Activated CD4-positive, alpha-beta T cell treated with anti-CD3 and anti-CD28 coated beads for 36 hours (primary cell): ENCODE measurements at regions of chr5 and their contacts with region 1.

Region 1: GRCh38 chr5:73381590-73382400 is 66.8 kb downstream of the FOXD1 start:
- DNase-seq: peak; percentile 28
- ATAC-seq: no peak
- H3K4me3 Mint-ChIP-seq: no peak overlapping the region
- H3K27ac Mint-ChIP-seq: no peak overlapping the region
- H3K4me1 Mint-ChIP-seq: peaks cover 15% of the 10 kb centered on the region
- H3K27me3 Mint-ChIP-seq: peaks cover 66% of the 10 kb centered on the region

Region 2: GRCh38 chr5:73365301-73365853 is 16.4 kb before region 1 on chr5:
- CTCF ChIA-PET with region 1: no interaction called
- POLR2A ChIA-PET with region 1: no interaction called
- intact Hi-C with region 1: no loop called
- DNase-seq: no peak
- ATAC-seq: no peak
- H3K4me3 Mint-ChIP-seq: no peak overlapping the region
- H3K27ac Mint-ChIP-seq: no peak overlapping the region
- H3K4me1 Mint-ChIP-seq: no peaks in the 10 kb centered on the region
- H3K27me3 Mint-ChIP-seq: peaks cover 33% of the 10 kb centered on the region

Region 3: DNA sequence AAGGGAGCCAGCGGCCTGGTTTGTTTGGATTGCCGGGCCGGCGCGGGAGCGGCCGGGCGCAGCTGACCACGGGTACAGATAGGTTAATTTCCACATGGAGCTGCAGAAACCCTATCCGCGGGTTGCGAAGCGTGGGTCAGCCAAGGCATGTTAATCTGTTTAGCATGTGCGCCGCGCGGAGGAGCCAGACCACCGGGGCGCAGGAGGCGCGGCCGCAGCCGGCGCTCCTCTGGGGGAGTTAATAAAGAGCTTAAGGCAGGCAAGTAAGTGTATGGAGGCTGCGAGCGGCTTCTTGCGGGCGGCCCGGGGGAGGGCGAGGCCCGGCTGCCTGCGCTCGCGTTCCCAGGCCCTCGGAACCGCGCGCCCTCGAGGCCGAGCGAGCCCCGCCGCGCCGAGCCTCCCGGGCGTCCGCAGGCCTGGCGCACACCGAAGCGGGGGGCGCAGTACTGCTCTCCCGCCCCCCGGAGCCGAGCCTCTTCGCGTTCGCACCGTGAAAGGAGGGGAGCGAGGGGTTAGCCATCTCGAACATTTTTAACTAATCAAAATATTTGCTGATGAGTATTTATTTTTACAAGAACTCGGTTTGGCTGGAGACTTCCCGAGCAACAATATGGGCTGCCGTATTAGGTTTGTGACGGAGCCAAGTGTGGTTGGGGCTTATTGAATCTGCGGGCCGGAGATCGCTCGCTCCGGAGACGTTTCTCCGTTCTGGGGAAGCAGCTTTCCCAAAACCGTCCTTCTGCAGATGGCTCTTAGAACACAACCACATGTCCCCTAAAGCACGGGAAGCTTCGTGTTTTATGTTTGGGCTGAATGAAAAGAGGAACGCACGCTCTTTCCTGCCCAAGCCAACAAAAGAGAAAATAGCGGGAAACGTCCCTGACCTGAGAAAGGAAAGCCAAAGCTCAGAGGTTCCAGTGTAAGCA is 37.9 kb after region 1 on chr5:
- CTCF ChIA-PET with region 1: interaction called, 3 read pairs
- POLR2A ChIA-PET with region 1: no interaction called
- intact Hi-C with region 1: loop called in 1 of 2 experiments (anchors 2 kb)
- DNase-seq: no peak
- ATAC-seq: no peak
- H3K4me3 Mint-ChIP-seq: no peak overlapping the region
- H3K27ac Mint-ChIP-seq: no peak overlapping the region
- H3K4me1 Mint-ChIP-seq: peaks cover 13% of the 10 kb centered on the region
- H3K27me3 Mint-ChIP-seq: peaks cover 80% of the 10 kb centered on the region